ENCODE measurements at regions of chr16 and their contacts with region 1.

Region 1: DNA sequence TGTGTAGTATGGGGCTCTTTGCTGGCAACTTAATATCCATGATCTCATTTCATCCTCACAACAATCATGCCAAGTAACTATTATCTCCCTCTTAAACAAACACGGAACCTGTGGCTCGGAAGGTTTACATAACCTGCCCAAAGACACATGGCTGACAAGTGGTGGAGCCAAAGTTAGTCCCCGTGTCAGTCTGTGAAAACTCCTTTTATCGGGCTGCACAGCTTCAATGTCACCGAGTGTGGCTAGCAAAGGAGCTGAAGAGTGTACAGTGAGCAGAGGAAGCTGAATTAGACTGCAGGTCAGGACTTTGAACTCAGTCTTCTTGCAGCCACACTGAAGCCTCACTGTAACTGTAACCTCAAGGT is 80.3 kb downstream of the PARN start:
- DNase-seq: no peak
- H3K4me3 Mint-ChIP-seq: no peak overlapping the region
- H3K27ac Mint-ChIP-seq: no peak overlapping the region
- H3K4me1 Mint-ChIP-seq: peaks cover 3% of the 10 kb centered on the region
- H3K27me3 Mint-ChIP-seq: no peaks in the 10 kb centered on the region

Region 2: GRCh38 chr16:14486520-14487303 is 63.1 kb before region 1 on chr16:
- CTCF ChIA-PET with region 1: no interaction called
- POLR2A ChIA-PET with region 1: no interaction called
- intact Hi-C with region 1: no loop called
- DNase-seq: no peak
- H3K4me3 Mint-ChIP-seq: no peak overlapping the region
- H3K27ac Mint-ChIP-seq: no peak overlapping the region
- H3K4me1 Mint-ChIP-seq: peaks cover 10% of the 10 kb centered on the region
- H3K27me3 Mint-ChIP-seq: no peaks in the 10 kb centered on the region

Region 3: GRCh38 chr16:14600164-14600563 is 50.4 kb after region 1 on chr16:
- CTCF ChIA-PET with region 1: interaction called, 3 read pairs
- POLR2A ChIA-PET with region 1: no interaction called
- intact Hi-C with region 1: loop called (anchors 10 kb)
- DNase-seq: no peak
- H3K4me3 Mint-ChIP-seq: no peak overlapping the region
- H3K27ac Mint-ChIP-seq: no peak overlapping the region
- H3K4me1 Mint-ChIP-seq: no peaks in the 10 kb centered on the region
- H3K27me3 Mint-ChIP-seq: no peaks in the 10 kb centered on the region

Region 4: DNA sequence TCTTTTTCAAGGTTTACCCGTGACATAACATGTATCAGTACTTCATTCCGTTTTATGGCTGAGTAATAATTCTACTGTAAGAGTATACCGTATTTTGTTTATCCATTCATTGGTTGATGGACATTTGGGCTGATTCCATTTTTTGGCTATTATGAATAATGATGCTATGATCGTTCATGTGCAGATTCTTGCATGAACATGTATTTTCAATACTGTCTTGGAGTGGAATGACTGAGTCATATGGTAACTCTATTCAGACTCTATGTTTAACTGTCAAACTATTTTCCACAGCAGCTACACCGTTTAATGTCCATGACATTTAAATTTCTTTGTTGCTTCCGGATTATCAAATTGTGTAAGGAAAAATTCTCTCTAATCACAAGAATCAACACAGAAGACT is 100.9 kb after region 1 on chr16:
- CTCF ChIA-PET with region 1: no interaction called
- POLR2A ChIA-PET with region 1: no interaction called
- intact Hi-C with region 1: no loop called
- DNase-seq: no peak
- H3K4me3 Mint-ChIP-seq: no peak overlapping the region
- H3K27ac Mint-ChIP-seq: peak overlapping the region; percentile 79
- H3K4me1 Mint-ChIP-seq: peaks cover 10% of the 10 kb centered on the region
- H3K27me3 Mint-ChIP-seq: no peaks in the 10 kb centered on the region